ENCODE measurements at regions of chr6 and their contacts with region 1.

Region 1: GRCh38 chr6:2841264-2842138 is at the start of gene SERPINB1:
- DNase-seq: peak; percentile 94 to 97 (median 97)
- ATAC-seq: peak; percentile 95
- H3K4me3 ChIP-seq: peak within 1 kb of the TSS; percentile 56
- H3K27ac ChIP-seq: peak within 1 kb of the TSS; percentile 79
- H3K4me1 ChIP-seq: peaks cover 17% of the 10 kb centered on the region
- H3K27me3 ChIP-seq: no peaks in the 10 kb centered on the region
- total RNA-seq, gene SERPINB1: 27.3 to 42.1 (median 32.7) TPM

Region 2: GRCh38 chr6:2791124-2791974 is 50.2 kb before region 1 on chr6:
- intact Hi-C with region 1: loop called in 3 of 4 experiments (anchors 5 to 10 kb)
- DNase-seq: peak; percentile 61 to 80 (median 72)
- ATAC-seq: peak; percentile 85 to 87
- H3K4me3 ChIP-seq: no peak overlapping the region
- H3K27ac ChIP-seq: no peak overlapping the region
- H3K4me1 ChIP-seq: peaks cover 5% of the 10 kb centered on the region
- H3K27me3 ChIP-seq: no peaks in the 10 kb centered on the region

Region 3: DNA sequence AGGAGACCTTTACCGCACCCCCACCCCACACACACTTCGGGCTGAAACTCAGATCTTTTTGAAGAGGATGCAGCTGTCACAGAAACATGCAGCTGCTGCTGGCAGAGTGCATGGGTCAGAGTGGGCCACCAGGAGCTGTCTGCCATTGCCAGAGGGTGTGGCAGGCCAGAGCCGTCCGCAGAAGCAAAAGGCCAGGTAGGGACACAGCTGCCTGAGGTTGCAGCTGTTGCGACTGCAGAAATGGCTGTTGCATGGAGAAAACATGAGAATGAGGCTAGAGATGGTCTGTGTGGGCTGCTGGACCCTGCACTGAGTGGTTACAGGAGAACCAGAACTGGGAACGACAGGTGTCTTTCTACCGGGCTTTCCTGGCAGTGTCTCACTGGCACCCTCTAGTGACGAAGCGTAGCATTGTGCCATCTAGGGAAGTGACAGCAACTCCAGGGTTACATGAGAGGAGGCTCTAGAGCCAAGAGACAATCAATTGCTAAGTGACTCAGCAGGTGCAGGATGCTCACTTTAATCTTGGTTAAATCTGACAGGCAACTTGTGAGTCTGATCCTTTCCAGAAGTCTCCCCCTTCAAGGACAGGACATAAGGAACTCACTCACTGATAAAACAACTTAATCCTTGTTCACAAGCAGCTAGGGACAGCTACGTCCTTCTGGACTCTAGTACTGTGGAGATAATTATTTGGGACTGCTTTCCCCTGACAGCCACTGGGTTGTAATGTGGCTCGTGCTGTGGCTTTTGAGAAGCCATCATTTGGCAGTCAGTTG is 90.7 kb after region 1 on chr6:
- intact Hi-C with region 1: loop called in 2 of 4 experiments (anchors 5 kb)
- DNase-seq: peak; percentile 72 to 92 (median 86)
- ATAC-seq: peak; percentile 92 to 94
- H3K4me3 ChIP-seq: no peak overlapping the region
- H3K27ac ChIP-seq: peak overlapping the region; percentile 31
- H3K4me1 ChIP-seq: peaks cover 3% of the 10 kb centered on the region
- H3K27me3 ChIP-seq: no peaks in the 10 kb centered on the region

Region 4: DNA sequence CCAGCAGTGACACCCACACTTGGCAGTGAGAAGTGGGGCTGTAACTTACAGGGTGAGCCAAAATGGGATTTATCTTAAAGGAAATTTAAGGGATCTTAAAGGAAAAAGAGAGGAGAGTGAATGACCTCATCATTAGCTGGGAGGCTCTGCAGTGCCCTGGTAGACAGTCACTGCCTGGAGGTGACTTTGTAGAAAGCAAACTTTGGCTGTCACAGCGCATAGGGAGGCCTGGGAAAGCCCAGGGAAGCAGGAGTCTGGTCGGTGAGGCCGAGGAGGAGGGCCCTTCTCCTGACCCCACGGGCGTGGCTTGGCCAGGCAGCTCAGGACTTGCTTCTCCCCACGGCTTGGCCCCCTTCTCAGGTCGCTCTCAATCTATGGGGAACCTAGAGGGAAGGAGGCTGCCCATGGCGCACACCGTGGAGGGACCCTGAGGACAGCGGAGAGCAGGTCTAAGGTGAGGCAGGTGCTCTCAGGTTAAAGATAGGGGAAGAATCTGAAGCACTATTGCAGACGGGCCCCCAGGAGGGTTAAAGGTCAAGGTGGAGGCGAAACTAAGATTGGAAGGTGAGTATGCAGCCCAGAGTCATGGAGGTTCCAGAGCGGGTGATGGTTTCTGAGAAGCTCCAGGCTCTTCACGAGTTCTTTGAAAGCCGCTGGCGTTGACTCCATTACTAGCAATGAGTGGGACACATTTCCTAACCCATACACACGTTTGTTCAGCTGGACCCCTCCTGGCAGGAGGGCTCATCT is 211.2 kb after region 1 on chr6:
- intact Hi-C with region 1: loop called in 1 of 4 experiments (anchors 10 kb)
- DNase-seq: peak in 1 of 3 donors; percentile 64
- ATAC-seq: no peak
- H3K4me3 ChIP-seq: no peak overlapping the region
- H3K27ac ChIP-seq: no peak overlapping the region
- H3K4me1 ChIP-seq: peaks cover 2% of the 10 kb centered on the region
- H3K27me3 ChIP-seq: no peaks in the 10 kb centered on the region

Measured in right cardiac atrium (tissue), 5 donors.